RWPE1 (cell line): ENCODE measurements at regions of chr16 and their contacts with region 1.

Region 1: DNA sequence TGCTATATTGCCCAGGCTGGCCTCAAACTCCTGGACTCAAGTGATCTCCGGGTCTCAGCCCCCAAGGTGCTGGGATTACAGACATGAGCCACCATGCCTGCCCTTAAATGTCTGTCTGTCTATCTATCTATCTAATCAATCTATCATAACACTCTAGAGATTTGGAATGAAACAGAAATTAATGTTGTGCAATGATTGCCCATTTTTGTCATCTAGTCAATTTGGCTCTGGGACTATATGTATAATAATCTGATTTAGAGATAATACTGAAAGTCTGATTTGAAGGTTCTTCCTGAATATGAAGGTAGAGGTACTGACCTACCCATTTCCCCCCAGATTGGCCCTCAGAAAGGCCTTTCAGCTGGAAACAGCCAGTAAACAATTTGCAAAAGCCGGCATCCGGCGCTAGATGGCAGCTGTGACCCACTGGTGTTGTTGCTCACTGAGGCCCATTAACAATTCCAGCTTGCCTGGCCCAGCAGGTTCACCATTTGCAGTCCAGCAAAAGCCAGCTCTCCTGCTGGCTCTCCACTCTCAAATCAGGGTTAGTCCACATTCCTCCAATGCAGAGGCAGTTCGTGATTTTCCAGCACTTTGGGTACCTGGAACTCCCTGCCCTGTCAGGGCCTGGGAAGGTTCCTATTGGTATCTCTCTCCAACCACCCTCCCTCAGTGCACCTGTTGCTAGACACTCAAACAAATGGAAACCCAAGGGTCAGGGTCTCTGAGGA is 22.9 kb upstream of the C16orf87 start:
- DNase-seq: peak; percentile 79
- H3K27ac ChIP-seq: no peak overlapping the region
- CTCF ChIP-seq: peak; percentile 87

Region 2: GRCh38 chr16:46696957-46697356 is 156.9 kb before region 1 on chr16:
- CTCF ChIA-PET with region 1: no interaction called
- POLR2A ChIA-PET with region 1: no interaction called
- DNase-seq: no peak
- H3K27ac ChIP-seq: no peak overlapping the region
- CTCF ChIP-seq: no peak

Region 3: DNA sequence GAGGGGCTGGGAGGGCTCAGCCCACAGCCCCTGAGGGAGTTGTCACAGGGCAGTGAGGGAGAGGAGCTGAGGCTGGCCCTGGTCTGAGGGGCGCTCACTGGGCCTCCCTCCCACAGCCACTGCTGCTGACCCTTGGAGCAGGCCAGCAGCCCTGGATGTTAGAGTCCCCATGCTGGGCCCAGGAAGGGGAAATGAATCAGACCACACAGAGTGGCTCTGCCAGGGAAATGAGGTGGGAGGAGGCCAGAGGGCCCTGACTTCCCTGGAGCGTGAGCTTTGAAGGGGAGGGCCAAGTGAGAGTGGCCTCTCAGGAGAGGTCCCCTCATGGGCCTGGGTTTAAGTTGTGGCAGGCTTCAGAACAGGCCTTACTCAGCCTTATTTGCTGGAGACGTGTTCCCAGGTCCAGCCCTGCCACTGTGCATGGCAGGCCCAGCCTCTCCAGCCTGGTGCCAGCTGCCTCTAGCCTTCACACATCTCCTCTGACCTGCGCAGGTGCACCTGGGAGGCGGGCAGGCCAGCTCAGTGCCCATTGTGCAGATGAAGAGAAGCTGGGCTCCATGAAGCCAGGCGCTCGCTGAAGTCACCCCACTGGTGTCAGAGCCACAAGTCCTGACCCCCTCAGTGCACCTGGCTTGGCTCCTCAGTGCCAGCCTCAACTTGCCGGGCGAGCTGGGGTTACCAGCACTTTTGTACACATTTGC is 45.7 kb after region 1 on chr16:
- CTCF ChIA-PET with region 1: interaction called, 11 read pairs
- POLR2A ChIA-PET with region 1: no interaction called
- DNase-seq: no peak
- H3K27ac ChIP-seq: peak overlapping the region; percentile 13
- CTCF ChIP-seq: no peak

Region 4: GRCh38 chr16:46908540-46909372 is 54.9 kb after region 1 on chr16:
- CTCF ChIA-PET with region 1: interaction called, 31 read pairs
- POLR2A ChIA-PET with region 1: no interaction called
- DNase-seq: peak; percentile 71
- H3K27ac ChIP-seq: peak overlapping the region; percentile 35; the same call in 1 of the 2 replicates
- CTCF ChIP-seq: peak; percentile 76

Region 5: DNA sequence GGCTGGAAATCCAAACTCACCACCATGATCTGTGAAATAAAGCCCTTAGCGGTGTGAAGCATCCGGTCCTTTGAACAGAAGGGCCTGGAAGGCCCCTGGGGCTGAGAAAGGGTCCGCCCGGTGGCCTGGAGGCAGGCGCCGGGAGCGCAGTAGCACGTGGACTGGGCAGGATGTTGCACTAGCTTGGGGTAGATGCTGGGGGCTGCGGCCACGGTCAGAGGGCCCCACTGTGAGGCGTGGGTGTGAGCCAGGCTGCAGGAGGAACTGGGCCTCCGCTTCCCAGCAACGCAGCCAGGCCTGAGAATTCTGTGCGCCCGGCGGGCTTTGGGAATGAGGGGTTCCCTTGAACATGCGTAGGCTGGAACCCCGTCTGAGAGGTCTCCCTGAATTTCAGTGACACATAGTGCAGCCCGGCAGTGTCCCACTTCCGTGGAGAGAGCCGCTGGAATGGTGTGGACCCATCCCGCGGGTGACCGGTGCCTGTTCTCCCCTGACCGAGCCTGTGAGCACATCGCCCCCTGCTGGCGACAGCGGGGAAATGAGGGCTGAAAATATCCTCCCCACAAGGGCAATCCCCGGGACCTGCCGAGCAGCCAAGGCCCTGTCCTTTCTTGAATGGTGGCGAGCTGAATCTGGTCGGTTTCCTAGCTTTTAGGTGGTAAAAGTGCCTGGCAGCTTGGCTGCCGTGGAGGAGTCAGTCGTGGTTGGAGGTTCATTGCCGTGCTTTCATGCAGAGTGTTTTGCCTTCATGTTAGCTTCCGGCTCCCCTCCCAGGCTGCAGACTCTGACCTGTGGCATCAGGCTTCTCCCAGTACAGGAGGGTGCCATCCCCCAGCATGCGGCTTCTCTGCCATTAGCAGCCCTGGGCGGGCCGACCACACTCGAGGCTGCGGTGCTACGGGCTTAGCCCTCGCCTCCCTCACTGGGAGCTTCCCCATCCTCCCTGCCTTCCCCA is 75.8 kb after region 1 on chr16:
- CTCF ChIA-PET with region 1: interaction called, 12 read pairs
- POLR2A ChIA-PET with region 1: no interaction called
- DNase-seq: peak; percentile 68
- H3K27ac ChIP-seq: 0 out of 2 replicates have a peak overlapping the region, but pooled peaks have one; percentile 5
- CTCF ChIP-seq: peak; percentile 88